Activated CD4-positive, alpha-beta memory T cell treated with anti-CD3 and anti-CD28 coated beads for 36 hours (primary cell): ENCODE measurements at regions of chr14 and their contacts with region 1.

Region 1: GRCh38 chr14:21269252-21270046 is at the start of gene HNRNPC:
- DNase-seq: peak; percentile 100
- H3K4me3 Mint-ChIP-seq: peak within 1 kb of the TSS; percentile 100
- H3K27ac Mint-ChIP-seq: peak within 1 kb of the TSS; percentile 100
- H3K4me1 Mint-ChIP-seq: peaks cover 24% of the 10 kb centered on the region
- H3K27me3 Mint-ChIP-seq: no peaks in the 10 kb centered on the region
- total RNA-seq, gene HNRNPC: 1,063 to 1,070 TPM

Region 2: DNA sequence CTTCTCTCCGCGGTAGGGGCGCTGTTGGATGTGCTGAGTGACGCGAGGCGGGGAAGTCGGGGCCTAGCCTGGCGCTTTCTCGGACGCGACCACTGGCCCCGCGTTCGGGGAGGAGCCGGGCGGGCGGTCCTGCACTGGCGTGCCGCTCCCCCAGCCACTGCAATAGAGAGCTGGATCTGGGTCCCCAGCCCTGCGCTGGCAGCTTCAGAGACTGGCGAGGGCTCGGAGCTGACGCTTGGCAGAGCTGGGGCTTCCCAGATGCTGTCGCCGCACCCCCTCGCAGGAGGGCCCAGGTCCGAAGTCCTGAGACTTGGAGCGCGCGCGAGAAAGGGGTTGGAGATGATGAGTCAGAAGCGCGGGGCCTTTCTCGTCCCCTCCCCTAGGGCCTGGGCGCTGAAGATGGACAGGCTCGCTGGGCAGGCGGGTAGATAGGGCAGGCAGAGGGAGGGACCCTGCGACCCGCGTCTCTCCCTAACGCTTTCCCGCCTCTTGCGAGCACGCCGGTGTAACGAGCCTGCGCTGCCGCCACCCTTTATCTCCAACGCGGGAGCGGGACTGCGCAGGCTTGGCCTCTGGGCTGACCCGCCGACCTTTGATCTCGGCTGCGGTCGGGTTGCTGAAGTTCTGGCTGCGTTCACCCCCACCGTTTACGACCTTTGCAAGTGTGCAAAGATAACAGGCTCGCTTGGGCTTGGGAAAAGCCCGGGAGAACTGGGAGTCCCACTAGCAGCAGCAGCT is 165.6 kb before region 1 on chr14:
- CTCF ChIA-PET with region 1: interaction called, 3 read pairs
- POLR2A ChIA-PET with region 1: no interaction called
- intact Hi-C with region 1: loop called (anchors 5 kb)
- DNase-seq: peak; percentile 96
- H3K4me3 Mint-ChIP-seq: peak overlapping the region; percentile 85
- H3K27ac Mint-ChIP-seq: peak overlapping the region; percentile 76
- H3K4me1 Mint-ChIP-seq: peaks cover 41% of the 10 kb centered on the region
- H3K27me3 Mint-ChIP-seq: no peaks in the 10 kb centered on the region

Region 3: GRCh38 chr14:21257394-21257909 is 12.0 kb before region 1 on chr14:
- CTCF ChIA-PET with region 1: interaction called, 7 read pairs
- POLR2A ChIA-PET with region 1: interaction called, 57 read pairs
- intact Hi-C with region 1: loop called (anchors 1 kb)
- DNase-seq: no peak
- H3K4me3 Mint-ChIP-seq: peak overlapping the region; percentile 51
- H3K27ac Mint-ChIP-seq: peak overlapping the region; percentile 77
- H3K4me1 Mint-ChIP-seq: peaks cover 75% of the 10 kb centered on the region
- H3K27me3 Mint-ChIP-seq: no peaks in the 10 kb centered on the region

Region 4: GRCh38 chr14:21437063-21437901 is 167.8 kb after region 1 on chr14:
- CTCF ChIA-PET with region 1: no interaction called
- POLR2A ChIA-PET with region 1: interaction called, 3 read pairs
- intact Hi-C with region 1: loop called (anchors 5 kb)
- DNase-seq: peak; percentile 99
- H3K4me3 Mint-ChIP-seq: peak overlapping the region; percentile 80
- H3K27ac Mint-ChIP-seq: peak overlapping the region; percentile 71
- H3K4me1 Mint-ChIP-seq: peaks cover 52% of the 10 kb centered on the region
- H3K27me3 Mint-ChIP-seq: no peaks in the 10 kb centered on the region

Region 5: DNA sequence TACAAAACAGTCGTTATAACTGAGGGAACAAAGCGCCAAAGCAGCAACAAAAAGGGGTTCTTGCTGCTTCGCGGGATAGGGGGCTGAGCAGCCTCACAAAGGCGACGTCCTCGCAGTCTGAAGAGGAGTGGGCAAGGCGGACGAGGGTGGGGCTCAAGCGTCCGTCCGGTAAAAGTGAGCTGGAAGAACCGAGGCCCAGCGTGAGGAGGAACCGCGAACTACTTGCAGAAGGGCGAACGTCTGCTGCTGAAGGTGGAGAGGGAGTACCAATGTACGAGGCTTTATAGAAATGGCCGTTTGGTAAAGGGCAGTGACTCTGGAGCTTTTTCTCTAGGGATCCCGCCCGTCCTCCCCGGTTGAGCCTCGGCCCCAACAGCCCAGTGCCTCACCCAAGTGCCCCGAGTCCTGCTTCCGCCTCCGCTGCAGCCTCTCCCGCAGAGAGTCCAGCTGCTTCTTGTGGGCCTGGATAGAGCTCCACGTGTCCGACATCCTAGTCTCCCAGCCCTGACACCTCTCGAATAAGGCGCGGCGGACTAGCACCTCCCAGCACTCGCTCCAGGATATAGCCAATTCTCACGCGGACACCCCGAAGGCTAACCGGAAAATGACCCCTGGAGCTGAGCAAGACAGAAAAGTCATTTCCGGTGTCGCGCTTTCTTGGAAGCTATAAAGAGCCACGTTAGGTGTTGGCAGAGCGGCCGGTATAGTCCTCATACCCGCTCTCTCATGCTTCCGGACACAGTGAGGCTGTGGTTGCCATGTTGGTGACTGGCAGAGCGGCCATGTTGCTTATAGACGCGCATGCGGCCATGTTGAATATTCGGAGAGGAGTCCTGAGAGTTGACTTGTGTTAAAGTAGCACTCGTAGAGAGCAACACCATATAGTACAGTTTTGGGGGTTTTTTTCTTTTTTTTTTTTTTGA is 241.5 kb after region 1 on chr14 and contains the start of gene METTL3:
- CTCF ChIA-PET with region 1: no interaction called
- POLR2A ChIA-PET with region 1: interaction called, 7 read pairs
- intact Hi-C with region 1: loop called (anchors 2 kb)
- DNase-seq: peak; percentile 96
- H3K4me3 Mint-ChIP-seq: peak within 1 kb of the TSS; percentile 99
- H3K27ac Mint-ChIP-seq: peak within 1 kb of the TSS; percentile 96
- H3K4me1 Mint-ChIP-seq: peaks cover 39% of the 10 kb centered on the region
- H3K27me3 Mint-ChIP-seq: no peaks in the 10 kb centered on the region
- total RNA-seq, gene METTL3: 64.1 TPM